ENCODE measurements at regions of chr5 and their contacts with region 1.

Region 1: DNA sequence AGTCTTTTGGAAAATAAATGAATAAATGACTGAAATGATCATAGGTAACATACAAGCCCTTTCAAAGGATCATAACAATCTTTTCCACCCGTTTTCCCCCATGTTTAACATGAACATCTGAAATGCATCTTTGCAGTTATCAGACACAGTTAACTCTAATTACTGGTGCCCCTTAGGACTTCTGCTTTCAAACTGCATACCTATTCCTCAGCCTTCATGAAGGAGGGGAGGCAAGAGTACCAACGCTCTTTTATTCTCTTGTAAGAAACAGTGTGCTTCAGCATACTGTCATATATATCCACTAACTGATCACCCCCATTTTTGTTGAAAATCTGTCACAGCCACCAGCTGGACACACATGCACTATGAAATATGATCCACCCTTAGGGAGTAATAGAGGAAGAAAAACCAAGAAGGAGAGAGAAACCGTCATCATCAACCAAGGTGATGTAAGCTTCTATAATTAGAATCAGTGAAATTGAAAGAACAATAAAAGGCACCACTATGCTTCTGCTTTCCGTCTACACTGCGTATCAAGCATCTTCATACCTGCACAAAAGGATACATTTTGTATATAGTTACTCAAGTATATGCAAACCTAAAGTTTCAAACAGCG is 98.7 kb downstream of the RAPGEF6 start:
- DNase-seq: peak; percentile 20
- ATAC-seq: peak; percentile 48
- H3K4me3 Mint-ChIP-seq: peak overlapping the region; percentile 26
- H3K27ac Mint-ChIP-seq: peak overlapping the region; percentile 86
- H3K4me1 Mint-ChIP-seq: peaks cover 86% of the 10 kb centered on the region
- H3K27me3 Mint-ChIP-seq: no peaks in the 10 kb centered on the region

Region 2: DNA sequence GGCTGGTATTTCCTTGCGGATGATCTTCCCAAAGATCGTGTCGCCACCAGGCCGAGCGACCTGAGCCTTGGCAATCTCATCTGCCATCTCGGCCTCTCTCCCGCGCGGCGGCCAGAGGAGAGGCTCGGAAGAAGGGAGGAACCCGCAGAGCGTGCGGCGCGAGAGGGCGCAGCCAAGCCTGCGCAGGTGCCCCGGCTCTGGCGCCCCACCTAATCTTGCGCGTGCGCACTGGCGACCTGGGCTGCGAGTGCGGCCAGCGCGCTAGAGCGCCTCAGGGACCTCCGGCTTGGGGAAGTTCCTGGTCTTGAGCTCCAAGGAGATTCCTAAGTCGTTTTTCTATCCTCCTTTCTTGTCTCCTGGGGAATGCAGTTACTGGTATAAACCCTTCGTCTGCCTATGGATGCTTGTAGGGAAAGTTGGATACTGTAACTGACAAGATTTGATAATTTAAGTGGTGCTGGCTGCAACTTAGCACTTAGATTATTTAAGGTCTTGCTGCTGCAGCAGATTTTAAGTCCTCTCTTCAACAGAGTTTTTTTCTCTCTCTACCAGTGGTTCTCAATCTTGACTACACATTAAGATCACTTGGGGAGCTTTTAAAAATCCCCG is 371.1 kb before region 1 on chr5 and contains the start of gene HINT1:
- CTCF ChIA-PET with region 1: no interaction called
- POLR2A ChIA-PET with region 1: no interaction called
- intact Hi-C with region 1: no loop called
- DNase-seq: peak; percentile 96
- ATAC-seq: peak; percentile 89
- H3K4me3 Mint-ChIP-seq: peak within 1 kb of the TSS; percentile 83
- H3K27ac Mint-ChIP-seq: peak within 1 kb of the TSS; percentile 99
- H3K4me1 Mint-ChIP-seq: peaks cover 51% of the 10 kb centered on the region
- H3K27me3 Mint-ChIP-seq: no peaks in the 10 kb centered on the region
- total RNA-seq, gene HINT1: 298 to 312 TPM

Region 3: GRCh38 chr5:131263648-131264450 is 272.5 kb before region 1 on chr5 and contains the start of gene CDC42SE2:
- CTCF ChIA-PET with region 1: no interaction called
- POLR2A ChIA-PET with region 1: interaction called, 5 read pairs
- intact Hi-C with region 1: loop called (anchors 5 to 10 kb)
- DNase-seq: peak; percentile 91
- ATAC-seq: peak; percentile 86
- H3K4me3 Mint-ChIP-seq: peak within 1 kb of the TSS; percentile 81
- H3K27ac Mint-ChIP-seq: peak within 1 kb of the TSS; percentile 96
- H3K4me1 Mint-ChIP-seq: peaks cover 44% of the 10 kb centered on the region
- H3K27me3 Mint-ChIP-seq: no peaks in the 10 kb centered on the region
- total RNA-seq, gene CDC42SE2: 68.3 to 99.6 TPM

Region 4: GRCh38 chr5:131394128-131394527 is 142.2 kb before region 1 on chr5:
- CTCF ChIA-PET with region 1: no interaction called
- POLR2A ChIA-PET with region 1: no interaction called
- intact Hi-C with region 1: loop called in 1 of 2 experiments (anchors 2 kb)
- DNase-seq: peak; percentile 68
- ATAC-seq: peak; percentile 68
- H3K4me3 Mint-ChIP-seq: peak overlapping the region; percentile 65
- H3K27ac Mint-ChIP-seq: peak overlapping the region; percentile 97
- H3K4me1 Mint-ChIP-seq: peaks cover 85% of the 10 kb centered on the region
- H3K27me3 Mint-ChIP-seq: no peaks in the 10 kb centered on the region

Region 5: DNA sequence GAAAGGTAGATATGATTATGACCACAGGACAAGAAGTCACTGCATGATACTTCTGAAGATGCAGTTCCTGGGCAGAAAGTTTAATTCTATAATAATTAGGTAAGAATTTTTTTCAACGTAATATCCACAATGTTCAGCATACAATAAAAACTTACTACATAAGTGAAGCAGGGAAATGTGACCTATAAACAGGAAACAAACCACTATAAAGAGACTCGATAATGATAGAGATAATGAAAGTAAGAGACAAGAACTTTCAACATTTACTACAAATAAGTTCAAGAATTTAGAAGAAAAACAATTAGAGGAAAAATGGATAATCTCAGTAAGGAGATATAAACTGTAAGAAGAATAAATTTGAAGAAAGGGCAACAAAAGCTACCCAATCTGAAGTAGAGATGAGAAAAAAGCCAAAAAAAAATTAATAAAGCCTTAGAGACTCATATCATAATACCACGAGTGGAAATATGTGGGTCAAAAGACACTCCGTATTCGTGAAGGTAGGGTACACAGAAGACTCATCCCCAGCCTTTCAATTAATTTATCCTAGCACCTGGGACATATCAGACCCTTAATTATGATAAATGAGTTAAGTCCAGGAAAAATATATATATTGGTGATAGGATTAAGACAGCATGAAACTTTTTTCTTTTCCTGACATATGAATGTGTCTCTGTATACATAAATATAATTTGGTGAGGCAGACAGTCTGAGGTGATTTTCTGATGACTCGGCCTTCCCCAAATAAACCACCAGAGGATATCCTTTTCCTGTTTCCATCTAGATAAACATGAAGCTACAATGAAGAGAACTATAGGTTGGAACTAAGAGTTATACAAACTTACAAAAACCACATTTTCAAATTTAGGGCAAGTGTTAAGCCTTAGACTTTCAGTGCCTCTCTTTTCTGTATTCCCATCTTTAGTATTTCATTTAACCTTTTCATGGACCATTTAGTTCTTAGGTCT is 21.7 kb before region 1 on chr5:
- CTCF ChIA-PET with region 1: interaction called, 3 read pairs
- POLR2A ChIA-PET with region 1: no interaction called
- intact Hi-C with region 1: loop called in 1 of 2 experiments (anchors 2 kb)
- DNase-seq: no peak
- ATAC-seq: peak; percentile 79
- H3K4me3 Mint-ChIP-seq: peak overlapping the region; percentile 61
- H3K27ac Mint-ChIP-seq: peak overlapping the region; percentile 71
- H3K4me1 Mint-ChIP-seq: peaks cover 54% of the 10 kb centered on the region
- H3K27me3 Mint-ChIP-seq: no peaks in the 10 kb centered on the region

Region 6: DNA sequence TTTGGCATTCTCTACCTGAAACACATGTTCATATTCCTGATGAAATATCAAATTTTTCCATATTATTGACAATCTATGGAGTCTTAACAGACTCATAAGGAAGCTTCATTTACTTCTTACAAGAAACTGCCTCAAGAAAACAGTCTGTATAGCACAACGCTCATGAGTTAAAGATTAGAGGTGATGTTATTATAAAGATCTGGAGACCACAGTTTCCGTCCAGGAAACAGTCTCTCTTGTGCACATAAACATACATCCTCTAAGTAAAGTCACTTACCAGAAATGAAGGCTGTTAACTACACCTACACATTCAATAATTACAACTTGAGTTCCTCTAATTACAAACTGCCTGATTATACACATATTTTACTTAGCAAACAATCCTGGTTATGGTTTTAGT is 11.9 kb after region 1 on chr5:
- CTCF ChIA-PET with region 1: interaction called, 13 read pairs
- POLR2A ChIA-PET with region 1: interaction called, 5 read pairs
- intact Hi-C with region 1: loop called in 1 of 2 experiments (anchors 2 kb)
- DNase-seq: no peak
- ATAC-seq: peak; percentile 92
- H3K4me3 Mint-ChIP-seq: peak overlapping the region; percentile 83
- H3K27ac Mint-ChIP-seq: peak overlapping the region; percentile 97
- H3K4me1 Mint-ChIP-seq: peaks cover 76% of the 10 kb centered on the region
- H3K27me3 Mint-ChIP-seq: no peaks in the 10 kb centered on the region

Region 7: GRCh38 chr5:131796793-131797693 is 260.7 kb after region 1 on chr5 and contains the start of gene FNIP1:
- CTCF ChIA-PET with region 1: no interaction called
- POLR2A ChIA-PET with region 1: no interaction called
- intact Hi-C with region 1: loop called in 1 of 2 experiments (anchors 5 kb)
- DNase-seq: peak; percentile 99
- ATAC-seq: peak; percentile 98
- H3K4me3 Mint-ChIP-seq: peak within 1 kb of the TSS; percentile 99
- H3K27ac Mint-ChIP-seq: peak within 1 kb of the TSS; percentile 91
- H3K4me1 Mint-ChIP-seq: peaks cover 28% of the 10 kb centered on the region
- H3K27me3 Mint-ChIP-seq: no peaks in the 10 kb centered on the region
- total RNA-seq, gene FNIP1: 14.2 to 16.3 TPM

Region 8: GRCh38 chr5:132419502-132420468 is 883.5 kb after region 1 on chr5:
- CTCF ChIA-PET with region 1: no interaction called
- POLR2A ChIA-PET with region 1: no interaction called
- intact Hi-C with region 1: loop called in 1 of 2 experiments (anchors 10 kb)
- DNase-seq: peak; percentile 75
- ATAC-seq: peak; percentile 65
- H3K4me3 Mint-ChIP-seq: peak overlapping the region; percentile 37
- H3K27ac Mint-ChIP-seq: peak overlapping the region; percentile 90
- H3K4me1 Mint-ChIP-seq: peaks cover 83% of the 10 kb centered on the region
- H3K27me3 Mint-ChIP-seq: no peaks in the 10 kb centered on the region